Upper lobe of right lung (tissue), 1 donor: ENCODE measurements at regions of chr4 and their contacts with region 1.

Region 1: DNA sequence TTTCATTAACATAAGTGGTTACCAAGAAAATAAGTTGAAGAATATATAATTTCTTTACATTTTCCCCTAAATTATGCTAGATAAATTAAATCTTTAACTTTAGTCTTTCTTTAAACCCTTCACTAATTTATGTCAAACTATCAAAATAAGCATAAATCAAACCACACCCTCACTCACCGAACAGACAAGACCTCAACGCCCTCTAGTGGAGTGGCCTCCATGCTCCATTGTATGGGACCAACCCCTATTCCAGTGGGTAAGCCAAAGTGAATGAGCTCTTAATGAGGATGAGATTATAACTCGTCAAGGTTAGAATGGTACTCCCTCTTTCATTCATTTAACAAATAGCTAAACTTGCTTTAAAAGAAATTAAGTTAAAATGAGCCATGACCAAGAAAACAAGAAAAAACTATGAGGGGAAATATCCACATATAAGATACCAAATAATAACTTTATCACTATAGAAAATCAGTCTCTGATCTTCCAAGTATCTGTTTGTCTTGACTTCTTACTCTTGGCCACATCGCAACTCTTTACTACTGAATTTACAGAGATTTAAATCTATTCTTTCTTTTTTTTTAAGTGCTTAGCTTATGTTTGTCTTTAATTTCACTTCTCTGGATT is 15.6 kb upstream of the BBS12 start:
- DNase-seq: no peak
- ATAC-seq: peak; percentile 93
- H3K4me3 ChIP-seq: no peak overlapping the region
- H3K27ac ChIP-seq: no peak overlapping the region
- H3K4me1 ChIP-seq: no peaks in the 10 kb centered on the region
- H3K27me3 ChIP-seq: no peaks in the 10 kb centered on the region
- CTCF ChIP-seq: peak; percentile 86

Region 2: DNA sequence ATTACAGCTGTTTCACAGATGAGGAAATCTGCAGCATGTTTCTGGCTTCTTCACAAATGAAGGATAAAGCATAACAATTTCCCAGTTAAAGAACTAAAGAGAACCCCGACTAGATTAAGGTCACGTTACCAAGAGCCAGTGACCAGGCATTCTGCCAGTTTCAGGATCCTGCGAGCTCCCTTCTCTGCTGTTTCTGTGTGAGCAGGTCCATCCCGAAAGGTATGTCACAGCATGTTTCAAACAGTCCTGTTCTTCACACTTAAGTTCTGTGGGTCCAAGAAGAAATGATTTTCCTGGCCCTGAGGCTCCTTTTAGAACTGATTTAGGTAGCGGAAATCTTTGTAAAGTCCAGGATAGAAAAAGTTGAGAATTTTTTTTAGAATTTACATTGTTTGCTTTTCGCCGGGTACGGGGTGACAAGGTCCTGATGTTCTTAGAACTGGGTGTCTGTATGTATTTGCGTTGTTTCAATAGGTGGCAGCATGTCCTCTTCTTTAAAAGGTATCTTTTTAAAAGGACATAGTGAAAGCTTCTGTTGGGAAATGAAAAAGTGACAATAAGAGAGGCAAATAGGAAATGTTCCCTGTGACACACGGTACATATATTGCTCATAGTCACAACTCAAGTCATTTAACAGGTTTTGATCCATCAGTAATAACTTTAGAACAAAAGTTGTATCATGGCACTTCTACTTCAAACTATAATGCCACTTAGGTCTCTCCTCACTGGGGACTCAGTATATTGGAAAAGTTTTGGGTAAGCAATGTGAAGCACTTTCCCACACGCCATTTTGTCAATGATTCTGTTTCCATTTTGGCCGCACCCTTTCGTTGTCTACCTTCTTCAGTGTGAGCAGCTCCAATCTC is 114.4 kb before region 1 on chr4:
- intact Hi-C with region 1: loop called (anchors 10 kb)
- DNase-seq: no peak
- ATAC-seq: peak; percentile 76
- H3K4me3 ChIP-seq: no peak overlapping the region
- H3K27ac ChIP-seq: no peak overlapping the region
- H3K4me1 ChIP-seq: no peaks in the 10 kb centered on the region
- H3K27me3 ChIP-seq: peaks cover 10% of the 10 kb centered on the region
- CTCF ChIP-seq: peak; percentile 45